Tibial artery (tissue), 4 donors: ENCODE measurements at regions of chr4 and their contacts with region 1.

Region 1: DNA sequence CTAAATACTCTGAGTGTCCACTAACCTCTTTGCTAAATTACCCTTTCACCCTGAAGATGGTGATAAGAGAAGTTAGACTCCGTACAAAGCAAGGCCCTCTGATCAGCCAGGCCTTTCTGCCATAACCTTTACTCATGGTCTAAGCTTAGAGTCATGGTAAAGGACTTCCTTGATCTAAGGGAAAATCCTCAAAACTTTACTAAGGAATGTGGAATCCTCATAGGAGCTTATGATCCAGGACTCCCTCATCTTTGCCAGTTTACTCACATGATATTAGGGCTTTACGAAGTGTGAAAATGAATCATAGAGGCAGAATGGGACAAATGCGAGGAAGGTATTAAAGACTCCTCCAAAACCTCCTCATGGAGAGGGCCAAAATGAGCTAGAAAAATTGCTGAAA is 7.9 kb upstream of the FAM13A start:
- DNase-seq: no peak
- H3K4me3 ChIP-seq: no peak overlapping the region
- H3K27ac ChIP-seq: no peak overlapping the region
- H3K4me1 ChIP-seq: no peaks in the 10 kb centered on the region
- H3K27me3 ChIP-seq: no peaks in the 10 kb centered on the region
- CTCF ChIP-seq: no peak

Region 2: GRCh38 chr4:89031272-89031671 is 33.6 kb before region 1 on chr4:
- intact Hi-C with region 1: loop called (anchors 2 kb)
- DNase-seq: no peak
- H3K4me3 ChIP-seq: no peak overlapping the region
- H3K27ac ChIP-seq: no peak overlapping the region
- H3K4me1 ChIP-seq: no peaks in the 10 kb centered on the region
- H3K27me3 ChIP-seq: no peaks in the 10 kb centered on the region
- CTCF ChIP-seq: no peak

Region 3: DNA sequence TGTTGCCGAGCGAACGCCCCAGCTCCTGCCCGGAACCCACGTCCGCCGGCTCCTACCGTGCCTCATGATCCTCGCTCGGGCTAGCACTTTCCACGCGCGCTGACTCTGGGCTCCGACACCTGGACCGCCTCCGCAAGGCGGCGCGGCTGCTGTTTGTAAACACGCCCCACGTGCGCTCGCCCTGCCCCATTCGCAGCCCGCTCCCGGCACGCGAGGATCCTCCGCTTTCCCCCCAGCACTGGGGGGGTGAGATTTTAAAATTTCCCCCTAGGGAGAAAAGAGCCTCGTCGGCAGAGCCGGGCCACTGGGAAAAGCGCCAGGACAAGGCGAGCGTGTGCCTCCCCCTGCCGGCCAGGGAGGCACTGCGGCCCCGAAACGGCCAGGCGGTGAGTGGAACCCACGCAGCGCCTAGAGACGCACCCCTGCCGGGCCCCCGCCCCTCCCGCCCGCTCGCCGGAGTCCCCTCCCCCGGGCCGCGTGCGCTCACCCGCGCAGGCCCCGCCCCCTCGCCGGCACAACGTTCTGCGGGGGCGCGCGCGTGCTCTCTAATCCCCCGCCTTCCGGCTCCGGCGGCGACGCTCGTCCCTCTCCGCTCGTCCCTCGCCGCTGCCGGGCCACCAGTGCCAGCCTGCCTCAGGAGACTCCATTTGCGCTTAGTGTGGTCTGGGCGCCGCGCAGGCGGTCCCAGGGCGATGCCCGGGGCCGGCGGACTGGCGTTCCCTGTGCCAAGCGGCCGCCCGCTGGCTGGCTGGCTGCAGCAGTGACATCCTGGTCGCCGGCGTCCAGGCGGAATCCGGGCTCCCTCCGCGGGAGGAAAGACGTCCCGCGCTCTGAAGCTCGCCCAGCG is 46.4 kb after region 1 on chr4 and contains the start of gene TIGD2:
- intact Hi-C with region 1: loop called (anchors 5 kb)
- DNase-seq: peak; percentile 80 to 93
- H3K4me3 ChIP-seq: peak within 1 kb of the TSS; percentile 67 to 76
- H3K27ac ChIP-seq: peak within 1 kb of the TSS; percentile 76 to 79
- H3K4me1 ChIP-seq: peaks cover 0 to 20% (median 9%) of the 10 kb centered on the region in 4 donors
- H3K27me3 ChIP-seq: no peaks in the 10 kb centered on the region
- CTCF ChIP-seq: peak; percentile 81 to 86